CD8-positive, alpha-beta T cell (primary cell): ENCODE measurements at regions of chr12 and their contacts with region 1.

Region 1: DNA sequence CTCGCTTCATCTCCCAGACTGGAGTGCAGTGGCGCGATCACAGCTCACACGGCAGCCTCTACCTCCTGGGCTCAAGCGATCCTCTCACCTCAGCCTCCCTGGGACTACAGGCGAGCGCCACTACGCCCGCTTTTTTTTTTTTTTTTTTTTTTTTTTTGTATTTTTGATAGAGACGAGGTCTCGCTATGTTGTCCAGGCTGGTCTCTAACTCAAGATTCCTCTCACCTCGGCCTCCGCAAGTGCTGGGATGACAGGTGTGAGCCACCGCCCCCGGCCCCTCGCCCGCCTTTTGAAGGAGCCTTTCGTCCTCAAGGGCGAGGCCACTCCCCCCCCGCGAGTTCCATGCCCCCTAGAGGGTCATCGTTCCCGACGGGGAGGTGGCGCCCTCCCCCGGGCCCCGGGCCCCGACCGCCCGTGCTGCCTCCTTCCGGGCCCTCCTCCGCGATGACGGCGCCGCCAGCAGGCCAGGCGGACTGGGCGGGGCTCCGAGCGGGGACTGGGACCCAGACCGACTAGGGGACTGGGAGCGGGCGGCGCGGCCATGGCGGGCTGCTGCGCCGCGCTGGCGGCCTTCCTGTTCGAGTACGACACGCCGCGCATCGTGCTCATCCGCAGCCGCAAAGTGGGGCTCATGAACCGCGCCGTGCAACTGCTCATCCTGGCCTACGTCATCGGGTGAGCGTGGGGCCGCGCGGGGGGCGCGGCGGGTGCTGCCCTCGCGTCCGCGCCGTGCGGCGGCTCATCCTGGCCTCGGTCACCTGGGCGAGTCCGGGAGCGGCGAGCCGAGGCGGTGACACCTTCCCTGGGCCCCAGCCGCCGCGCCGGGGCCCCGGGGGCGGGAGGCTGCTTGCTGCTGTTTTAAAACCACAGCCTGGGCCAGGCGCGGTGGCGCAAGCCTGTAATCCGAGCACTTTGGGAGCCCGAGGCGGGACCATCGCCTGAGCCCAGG is at the start of gene P2RX4:
- DNase-seq: peak; percentile 72 to 96 (median 88)
- ATAC-seq: peak; percentile 86
- H3K4me3 ChIP-seq: peak within 1 kb of the TSS; percentile 60 to 66
- H3K4me3 Mint-ChIP-seq: peak within 1 kb of the TSS; percentile 78
- H3K27ac ChIP-seq: peak within 1 kb of the TSS; percentile 85 to 86
- H3K27ac Mint-ChIP-seq: peak within 1 kb of the TSS; percentile 92
- H3K4me1 ChIP-seq: peaks cover 16% of the 10 kb centered on the region
- H3K4me1 Mint-ChIP-seq: peaks cover 24% of the 10 kb centered on the region
- H3K27me3 ChIP-seq: no peaks in the 10 kb centered on the region
- H3K27me3 Mint-ChIP-seq: no peaks in the 10 kb centered on the region
- CTCF ChIP-seq: no peak
- total RNA-seq, gene P2RX4: 27.5 to 29.8 TPM

Region 2: GRCh38 chr12:120833849-120834248 is 376.0 kb before region 1 on chr12:
- CTCF ChIA-PET with region 1: no interaction called
- POLR2A ChIA-PET with region 1: no interaction called
- intact Hi-C with region 1: no loop called
- DNase-seq: no peak
- ATAC-seq: no peak
- H3K4me3 ChIP-seq: no peak overlapping the region
- H3K4me3 Mint-ChIP-seq: peak overlapping the region; percentile 11
- H3K27ac ChIP-seq: no peak overlapping the region
- H3K27ac Mint-ChIP-seq: peak overlapping the region; percentile 19
- H3K4me1 ChIP-seq: peaks cover 41% of the 10 kb centered on the region
- H3K4me1 Mint-ChIP-seq: peaks cover 73% of the 10 kb centered on the region
- H3K27me3 ChIP-seq: no peaks in the 10 kb centered on the region
- H3K27me3 Mint-ChIP-seq: no peaks in the 10 kb centered on the region
- CTCF ChIP-seq: no peak

Region 3: DNA sequence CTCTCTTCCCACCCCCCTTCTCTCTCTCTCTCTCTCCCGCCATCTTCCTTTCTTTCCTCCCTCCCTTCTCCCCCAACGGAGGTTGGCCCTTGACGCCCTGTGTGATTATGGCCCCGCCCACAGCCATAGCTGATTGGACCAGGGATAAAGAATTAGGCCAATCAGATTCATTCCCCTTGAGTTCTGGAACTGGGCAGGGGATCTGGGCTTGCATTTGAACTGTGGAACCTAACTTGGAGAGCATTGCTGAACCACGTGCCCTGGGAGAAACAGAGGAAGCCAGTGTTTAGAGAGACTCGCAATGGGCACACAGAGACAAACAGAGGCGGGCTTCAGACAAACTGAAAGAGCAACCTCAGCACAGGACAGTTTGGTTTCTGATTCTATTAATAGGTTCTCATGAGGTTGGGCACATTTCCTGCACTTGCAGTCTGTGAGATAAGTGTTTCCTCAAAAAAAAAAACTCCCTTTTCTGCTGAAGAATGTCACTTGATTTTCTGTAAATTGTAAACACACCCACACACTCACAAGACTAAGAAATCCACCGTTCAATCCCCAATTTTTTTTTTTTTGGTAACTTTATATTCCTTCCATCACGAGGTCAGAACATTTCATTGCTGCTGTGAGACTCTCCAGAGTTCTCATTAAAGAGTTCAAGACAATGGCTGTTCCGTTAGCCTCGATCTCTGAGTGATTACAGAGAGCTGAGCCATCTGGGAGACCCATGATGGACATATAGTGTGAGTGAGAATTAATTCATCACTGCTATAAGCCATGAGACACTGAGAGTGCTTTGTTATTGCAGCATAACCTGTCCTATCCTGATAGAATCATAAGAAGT is 80.7 kb before region 1 on chr12:
- CTCF ChIA-PET with region 1: no interaction called
- POLR2A ChIA-PET with region 1: no interaction called
- intact Hi-C with region 1: loop called (anchors 1 to 2 kb)
- DNase-seq: peak; percentile 54 to 92 (median 79)
- ATAC-seq: peak; percentile 86
- H3K4me3 ChIP-seq: peak overlapping the region; percentile 29 to 45
- H3K4me3 Mint-ChIP-seq: peak overlapping the region; percentile 82
- H3K27ac ChIP-seq: peak overlapping the region; percentile 40 to 90
- H3K27ac Mint-ChIP-seq: peak overlapping the region; percentile 92
- H3K4me1 ChIP-seq: peaks cover 55% of the 10 kb centered on the region
- H3K4me1 Mint-ChIP-seq: peaks cover 86% of the 10 kb centered on the region
- H3K27me3 ChIP-seq: no peaks in the 10 kb centered on the region
- H3K27me3 Mint-ChIP-seq: no peaks in the 10 kb centered on the region
- CTCF ChIP-seq: no peak

Region 4: GRCh38 chr12:121223292-121224285 is 13.7 kb after region 1 on chr12:
- CTCF ChIA-PET with region 1: interaction called, 3 read pairs
- POLR2A ChIA-PET with region 1: interaction called, 3 read pairs
- intact Hi-C with region 1: loop called in 1 of 2 experiments (anchors 2 kb)
- DNase-seq: peak in 6 of 9 experiments; percentile 32 to 72 (median 46)
- ATAC-seq: peak; percentile 58
- H3K4me3 ChIP-seq: no peak overlapping the region
- H3K4me3 Mint-ChIP-seq: peak overlapping the region; percentile 46
- H3K27ac ChIP-seq: peak overlapping the region; percentile 35 to 69
- H3K27ac Mint-ChIP-seq: peak overlapping the region; percentile 95
- H3K4me1 ChIP-seq: peaks cover 41% of the 10 kb centered on the region
- H3K4me1 Mint-ChIP-seq: peaks cover 43% of the 10 kb centered on the region
- H3K27me3 ChIP-seq: no peaks in the 10 kb centered on the region
- H3K27me3 Mint-ChIP-seq: no peaks in the 10 kb centered on the region
- CTCF ChIP-seq: peak; percentile 34